ENCODE measurements at regions of chr6 and their contacts with region 1.

Region 1: GRCh38 chr6:158972241-158973233 is 27.5 kb downstream of the RSPH3 start:
- DNase-seq: no peak
- ATAC-seq: peak; percentile 51

Region 2: GRCh38 chr6:158475344-158476302 is 496.9 kb before region 1 on chr6:
- intact Hi-C with region 1: no loop called
- DNase-seq: no peak
- ATAC-seq: peak; percentile 68

Region 3: DNA sequence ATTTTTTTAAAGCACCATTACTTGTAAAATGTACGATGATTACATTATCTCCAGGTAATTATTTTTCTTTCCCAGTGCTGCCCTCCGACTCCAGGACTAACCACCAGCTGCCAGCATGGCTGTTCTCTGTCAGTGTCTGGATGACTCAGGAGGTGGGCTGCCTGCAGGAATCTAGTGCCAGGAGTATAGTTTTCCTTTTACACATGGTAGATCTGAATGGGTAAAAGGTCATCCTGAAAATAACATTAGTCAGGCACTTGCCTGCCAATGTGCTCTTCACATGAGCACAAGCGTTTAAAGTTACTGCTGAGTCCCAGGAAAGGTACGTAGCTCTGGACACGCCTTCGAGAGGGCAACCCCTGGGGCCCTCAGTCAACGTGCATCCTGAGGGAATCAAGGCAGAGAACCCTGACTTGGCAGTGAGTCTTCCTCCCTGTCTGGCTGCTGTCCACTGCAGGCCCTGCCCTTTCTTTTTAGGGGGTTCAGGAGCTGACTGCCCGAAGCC is 330.4 kb before region 1 on chr6:
- intact Hi-C with region 1: no loop called
- DNase-seq: peak; percentile 50
- ATAC-seq: peak; percentile 50

Region 4: GRCh38 chr6:158706096-158706982 is 266.2 kb before region 1 on chr6:
- intact Hi-C with region 1: loop called (anchors 5 kb)
- DNase-seq: peak; percentile 78
- ATAC-seq: peak; percentile 67

Region 5: GRCh38 chr6:159023893-159024292 is 51.4 kb after region 1 on chr6:
- intact Hi-C with region 1: no loop called
- DNase-seq: no peak
- ATAC-seq: no peak

Measured in left ventricle myocardium superior (tissue), 1 donor.